T-cell (primary cell): ENCODE measurements at regions of chr19 and their contacts with region 1.

Region 1: GRCh38 chr19:47243776-47244547 is 12.4 kb upstream of the CCDC9 start:
- DNase-seq: peak; percentile 69 to 94 (median 81)
- ATAC-seq: peak; percentile 44 to 67 (median 66)
- H3K4me3 ChIP-seq: peak overlapping the region; percentile 32 to 34
- H3K4me3 Mint-ChIP-seq: peak overlapping the region in 2 of 3 donors; percentile 51 to 66
- H3K27ac ChIP-seq: peak overlapping the region; percentile 72
- H3K27ac Mint-ChIP-seq: peak overlapping the region; percentile 81 to 89
- H3K4me1 ChIP-seq: peaks cover 38 to 57% of the 10 kb centered on the region in 2 experiments
- H3K4me1 Mint-ChIP-seq: peaks cover 3 to 36% (median 33%) of the 10 kb centered on the region in 3 donors
- H3K27me3 ChIP-seq: peaks cover 6 to 9% of the 10 kb centered on the region in 2 experiments
- H3K27me3 Mint-ChIP-seq: no peaks in the 10 kb centered on the region

Region 2: GRCh38 chr19:47005873-47006272 is 238.1 kb before region 1 on chr19:
- CTCF ChIA-PET with region 1: no interaction called
- POLR2A ChIA-PET with region 1: no interaction called
- DNase-seq: no peak
- ATAC-seq: peak in 2 of 4 experiments; percentile 25 to 49
- H3K4me3 ChIP-seq: no peak overlapping the region
- H3K4me3 Mint-ChIP-seq: no peak overlapping the region
- H3K27ac ChIP-seq: no peak overlapping the region
- H3K27ac Mint-ChIP-seq: no peak overlapping the region
- H3K4me1 ChIP-seq: peaks cover 0 to 13% of the 10 kb centered on the region in 2 experiments
- H3K4me1 Mint-ChIP-seq: peaks cover 7 to 18% (median 14%) of the 10 kb centered on the region in 3 donors
- H3K27me3 ChIP-seq: peaks cover 0 to 18% of the 10 kb centered on the region in 2 experiments
- H3K27me3 Mint-ChIP-seq: peaks cover 4 to 11% of the 10 kb centered on the region in 2 donors

Region 3: GRCh38 chr19:47112997-47113849 is 130.7 kb before region 1 on chr19 and contains the start of gene ZC3H4:
- CTCF ChIA-PET with region 1: interaction called in 1 of 2 experiments, 12 read pairs
- POLR2A ChIA-PET with region 1: no interaction called
- DNase-seq: peak; percentile 98 to 100 (median 99)
- ATAC-seq: peak; percentile 79 to 84 (median 82)
- H3K4me3 ChIP-seq: peak within 1 kb of the TSS; percentile 79 to 80
- H3K4me3 Mint-ChIP-seq: peak within 1 kb of the TSS; percentile 92 to 99 (median 95)
- H3K27ac ChIP-seq: peak within 1 kb of the TSS; percentile 98
- H3K27ac Mint-ChIP-seq: peak within 1 kb of the TSS; percentile 100
- H3K4me1 ChIP-seq: peaks cover 25 to 26% of the 10 kb centered on the region in 2 experiments
- H3K4me1 Mint-ChIP-seq: peaks cover 33 to 36% (median 35%) of the 10 kb centered on the region in 3 donors
- H3K27me3 ChIP-seq: no peaks in the 10 kb centered on the region
- H3K27me3 Mint-ChIP-seq: no peaks in the 10 kb centered on the region
- total RNA-seq, gene ZC3H4: 64.0 to 81.4 (median 72.3) TPM

Region 4: GRCh38 chr19:47152224-47153017 is 91.5 kb before region 1 on chr19:
- CTCF ChIA-PET with region 1: interaction called, 5 to 23 read pairs
- POLR2A ChIA-PET with region 1: no interaction called
- DNase-seq: no peak
- ATAC-seq: no peak
- H3K4me3 ChIP-seq: no peak overlapping the region
- H3K4me3 Mint-ChIP-seq: no peak overlapping the region
- H3K27ac ChIP-seq: no peak overlapping the region
- H3K27ac Mint-ChIP-seq: peak overlapping the region in 1 of 2 donors; percentile 32
- H3K4me1 ChIP-seq: peaks cover 34 to 53% of the 10 kb centered on the region in 2 experiments
- H3K4me1 Mint-ChIP-seq: peaks cover 50 to 58% (median 56%) of the 10 kb centered on the region in 3 donors
- H3K27me3 ChIP-seq: no peaks in the 10 kb centered on the region
- H3K27me3 Mint-ChIP-seq: no peaks in the 10 kb centered on the region

Region 5: DNA sequence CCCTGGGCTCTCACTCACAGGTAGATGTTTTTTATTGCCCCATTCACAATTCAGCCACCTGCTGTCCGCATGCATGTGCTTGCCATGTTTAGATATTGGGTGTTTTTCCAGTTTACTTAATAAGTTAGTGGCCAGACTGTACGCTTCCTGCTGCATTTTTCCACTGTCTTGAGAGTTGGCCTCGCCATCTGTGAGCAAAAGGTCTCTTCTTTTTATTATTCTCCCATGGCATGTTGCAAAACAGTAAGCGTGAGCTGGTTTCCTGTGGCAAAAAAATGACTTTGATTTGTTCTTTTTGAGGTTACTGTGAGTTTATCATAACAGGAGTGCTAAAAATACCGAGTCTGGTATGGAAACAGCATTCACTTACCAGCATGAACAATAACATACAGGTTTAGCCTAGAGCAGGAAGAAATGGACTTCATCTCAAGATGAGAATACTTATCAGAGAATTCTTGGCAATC is 67.3 kb before region 1 on chr19:
- CTCF ChIA-PET with region 1: interaction called in 1 of 2 experiments, 10 read pairs
- POLR2A ChIA-PET with region 1: interaction called in 1 of 2 experiments, 3 read pairs
- DNase-seq: peak in 23 of 35 experiments; percentile 5 to 73 (median 29)
- ATAC-seq: peak; percentile 87 to 96 (median 92)
- H3K4me3 ChIP-seq: peak overlapping the region in 1 of 2 donors; percentile 23
- H3K4me3 Mint-ChIP-seq: peak overlapping the region; percentile 65 to 73 (median 65)
- H3K27ac ChIP-seq: peak overlapping the region; percentile 66
- H3K27ac Mint-ChIP-seq: peak overlapping the region; percentile 98 to 99
- H3K4me1 ChIP-seq: peaks cover 48 to 53% of the 10 kb centered on the region in 2 experiments
- H3K4me1 Mint-ChIP-seq: peaks cover 64 to 70% (median 66%) of the 10 kb centered on the region in 3 donors
- H3K27me3 ChIP-seq: no peaks in the 10 kb centered on the region
- H3K27me3 Mint-ChIP-seq: no peaks in the 10 kb centered on the region

Region 6: GRCh38 chr19:47210689-47211316 is 33.2 kb before region 1 on chr19:
- CTCF ChIA-PET with region 1: interaction called, 33 to 179 read pairs
- POLR2A ChIA-PET with region 1: no interaction called
- DNase-seq: peak; percentile 49 to 89 (median 72)
- ATAC-seq: peak; percentile 67 to 91 (median 80)
- H3K4me3 ChIP-seq: no peak overlapping the region
- H3K4me3 Mint-ChIP-seq: no peak overlapping the region
- H3K27ac ChIP-seq: no peak overlapping the region
- H3K27ac Mint-ChIP-seq: peak overlapping the region; percentile 71 to 80
- H3K4me1 ChIP-seq: peaks cover 0 to 10% of the 10 kb centered on the region in 2 experiments
- H3K4me1 Mint-ChIP-seq: peaks cover 9 to 11% (median 11%) of the 10 kb centered on the region in 3 donors
- H3K27me3 ChIP-seq: no peaks in the 10 kb centered on the region
- H3K27me3 Mint-ChIP-seq: no peaks in the 10 kb centered on the region

Region 7: DNA sequence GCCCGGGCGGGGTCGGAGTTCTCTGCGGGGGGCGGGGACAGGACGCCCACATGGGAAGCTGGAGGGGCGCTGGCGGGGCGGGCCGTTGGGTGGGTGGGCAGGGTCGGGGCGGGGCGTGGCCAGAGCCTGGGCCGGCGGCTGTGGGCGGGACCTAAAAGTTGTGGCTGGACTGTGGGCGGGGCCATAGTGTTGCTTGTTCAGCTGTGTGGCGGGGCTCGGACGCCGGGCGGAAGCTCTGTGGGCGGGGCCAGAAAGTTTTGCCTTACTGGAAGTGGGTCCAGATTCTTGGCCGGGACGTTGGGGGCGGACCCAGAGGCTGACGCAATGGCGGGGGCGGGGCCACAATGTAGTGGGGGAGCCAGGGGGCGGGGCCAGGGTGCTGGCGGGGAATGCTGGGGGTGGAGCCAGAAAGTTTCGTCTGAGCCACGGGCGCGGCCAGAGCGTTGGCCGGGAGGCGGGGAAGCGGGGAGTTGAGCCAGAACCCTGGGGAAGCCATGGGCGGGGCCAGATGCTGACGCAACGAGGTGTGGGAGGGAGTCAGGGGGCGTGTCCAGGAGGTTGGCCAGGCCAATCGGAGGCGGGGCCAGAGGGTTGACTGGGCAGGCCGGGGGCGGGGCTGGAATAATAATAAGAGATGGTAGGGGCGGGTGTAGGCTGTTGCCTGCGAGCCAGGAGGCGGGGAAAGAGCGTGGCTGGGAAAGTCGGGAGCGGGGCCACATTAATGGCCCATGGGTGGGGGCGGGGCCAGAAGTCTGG is 12.9 kb after region 1 on chr19:
- CTCF ChIA-PET with region 1: interaction called, 3 to 10 read pairs
- POLR2A ChIA-PET with region 1: interaction called in 1 of 2 experiments, 6 read pairs
- DNase-seq: peak; percentile 85 to 99 (median 95)
- ATAC-seq: peak; percentile 74 to 86 (median 80)
- H3K4me3 ChIP-seq: peak overlapping the region; percentile 49 to 67
- H3K4me3 Mint-ChIP-seq: peak overlapping the region; percentile 84 to 91 (median 87)
- H3K27ac ChIP-seq: peak overlapping the region; percentile 95
- H3K27ac Mint-ChIP-seq: peak overlapping the region; percentile 91 to 96
- H3K4me1 ChIP-seq: peaks cover 6 to 40% of the 10 kb centered on the region in 2 experiments
- H3K4me1 Mint-ChIP-seq: peaks cover 31 to 43% (median 42%) of the 10 kb centered on the region in 3 donors
- H3K27me3 ChIP-seq: no peaks in the 10 kb centered on the region
- H3K27me3 Mint-ChIP-seq: no peaks in the 10 kb centered on the region

Region 8: GRCh38 chr19:47370045-47370611 is 126.2 kb after region 1 on chr19:
- CTCF ChIA-PET with region 1: no interaction called
- POLR2A ChIA-PET with region 1: no interaction called
- DNase-seq: peak in 11 of 35 experiments; percentile 4 to 53 (median 15)
- ATAC-seq: no peak
- H3K4me3 ChIP-seq: no peak overlapping the region
- H3K4me3 Mint-ChIP-seq: no peak overlapping the region
- H3K27ac ChIP-seq: no peak overlapping the region
- H3K27ac Mint-ChIP-seq: no peak overlapping the region
- H3K4me1 ChIP-seq: no peaks in the 10 kb centered on the region
- H3K4me1 Mint-ChIP-seq: no peaks in the 10 kb centered on the region
- H3K27me3 ChIP-seq: no peaks in the 10 kb centered on the region
- H3K27me3 Mint-ChIP-seq: no peaks in the 10 kb centered on the region